HEK293 (cell line): ENCODE measurements at regions of chr9 and their contacts with region 1.

Region 1: GRCh38 chr9:35826071-35826701 is 2.3 kb downstream of the FAM221B start:
- H3K4me3 ChIP-seq: no peak overlapping the region
- H3K27ac ChIP-seq: no peak overlapping the region; the same call in 1 of the 2 replicates
- H3K4me1 ChIP-seq: peaks cover 4% of the 10 kb centered on the region; the same call in 1 of the 2 replicates
- CTCF ChIP-seq: peak; percentile 65; the same call in 1 of the 2 replicates

Region 2: GRCh38 chr9:34985311-34985899 is 840.8 kb before region 1 on chr9:
- CTCF ChIA-PET with region 1: no interaction called
- POLR2A ChIA-PET with region 1: no interaction called
- H3K4me3 ChIP-seq: no peak overlapping the region
- H3K27ac ChIP-seq: no peak overlapping the region
- H3K4me1 ChIP-seq: no peaks in the 10 kb centered on the region
- CTCF ChIP-seq: 0 out of 2 replicates have a peak, but pooled peaks have one; percentile 10

Region 3: DNA sequence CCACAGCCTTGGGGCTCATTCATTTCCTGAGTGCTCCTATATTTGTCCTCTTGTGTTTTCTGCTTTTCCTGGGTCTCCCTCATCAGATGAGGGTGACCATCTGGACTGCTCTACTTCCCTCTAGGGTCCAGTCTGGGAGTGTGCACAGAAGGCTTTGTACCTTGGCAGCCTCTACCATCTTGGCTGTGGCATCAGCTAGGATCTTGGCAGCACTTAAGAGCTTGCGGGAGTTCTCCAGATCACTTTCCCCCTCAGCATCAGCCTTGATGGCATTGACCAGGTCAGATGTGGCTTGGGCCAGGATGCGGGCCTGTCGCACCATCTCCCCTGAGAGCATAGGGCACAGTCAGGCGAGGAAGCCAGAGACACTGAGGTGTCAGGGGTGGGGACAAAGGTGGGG is 110.0 kb before region 1 on chr9:
- CTCF ChIA-PET with region 1: no interaction called
- POLR2A ChIA-PET with region 1: no interaction called
- H3K4me3 ChIP-seq: no peak overlapping the region
- H3K27ac ChIP-seq: no peak overlapping the region
- H3K4me1 ChIP-seq: no peaks in the 10 kb centered on the region
- CTCF ChIP-seq: no peak

Region 4: GRCh38 chr9:35798658-35799374 is 27.4 kb before region 1 on chr9:
- CTCF ChIA-PET with region 1: interaction called, 19 read pairs
- POLR2A ChIA-PET with region 1: no interaction called
- H3K4me3 ChIP-seq: no peak overlapping the region
- H3K27ac ChIP-seq: no peak overlapping the region
- H3K4me1 ChIP-seq: no peaks in the 10 kb centered on the region
- CTCF ChIP-seq: no peak

Region 5: GRCh38 chr9:35814841-35815543 is 11.2 kb before region 1 on chr9 and contains the start of gene HINT2:
- CTCF ChIA-PET with region 1: interaction called, 42 read pairs
- POLR2A ChIA-PET with region 1: interaction called, 11 read pairs
- H3K4me3 ChIP-seq: peak within 1 kb of the TSS; percentile 76
- H3K27ac ChIP-seq: peak within 1 kb of the TSS; percentile 78
- H3K4me1 ChIP-seq: no peaks in the 10 kb centered on the region
- CTCF ChIP-seq: no peak

Region 6: GRCh38 chr9:35910613-35911359 is 84.6 kb after region 1 on chr9:
- CTCF ChIA-PET with region 1: interaction called, 18 read pairs
- POLR2A ChIA-PET with region 1: no interaction called
- H3K4me3 ChIP-seq: no peak overlapping the region
- H3K27ac ChIP-seq: no peak overlapping the region
- H3K4me1 ChIP-seq: peaks cover 10% of the 10 kb centered on the region
- CTCF ChIP-seq: peak; percentile 49; the same call in 1 of the 2 replicates

Region 7: DNA sequence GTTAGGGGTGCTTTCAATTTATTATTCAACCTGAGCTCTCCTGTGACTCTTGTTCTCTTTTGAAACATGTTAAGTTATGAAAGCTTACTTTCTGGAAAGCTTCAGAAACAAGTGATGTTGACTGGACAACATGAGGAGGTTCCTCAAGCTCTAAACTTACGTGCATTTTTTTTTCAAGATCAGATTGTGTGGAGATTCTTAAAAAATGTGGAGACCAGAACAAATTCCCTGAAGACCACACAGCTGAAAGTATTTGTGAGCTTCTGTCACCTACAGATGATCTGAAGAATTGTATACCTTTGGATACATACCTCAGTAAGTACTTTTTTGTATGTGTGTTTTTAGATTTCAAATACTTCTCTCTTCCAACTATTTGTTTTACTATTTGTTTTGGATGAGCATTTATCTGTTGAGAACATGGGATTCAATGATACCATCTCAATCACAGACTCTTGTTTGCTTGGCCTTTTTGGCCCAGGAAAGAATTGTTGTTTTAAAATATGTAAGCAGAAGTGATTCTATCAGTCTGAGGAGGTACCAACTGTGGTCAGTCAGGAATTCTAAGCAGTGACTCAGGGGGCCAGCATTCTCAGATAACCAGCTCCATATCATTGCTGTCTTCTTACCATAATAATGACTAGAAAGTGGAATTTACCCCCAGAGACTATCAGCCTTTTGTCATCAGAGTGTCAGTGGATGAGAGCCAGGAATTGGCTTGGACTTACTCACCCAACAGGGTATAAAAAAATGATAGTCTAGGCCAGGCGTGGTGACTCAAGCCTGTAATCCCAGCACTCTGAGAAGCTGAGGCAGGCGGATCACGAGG is 275.9 kb after region 1 on chr9:
- CTCF ChIA-PET with region 1: no interaction called
- POLR2A ChIA-PET with region 1: no interaction called
- H3K4me3 ChIP-seq: no peak overlapping the region
- H3K27ac ChIP-seq: no peak overlapping the region
- H3K4me1 ChIP-seq: no peaks in the 10 kb centered on the region
- CTCF ChIP-seq: no peak

Region 8: GRCh38 chr9:36118706-36119105 is 292.5 kb after region 1 on chr9:
- CTCF ChIA-PET with region 1: no interaction called
- POLR2A ChIA-PET with region 1: no interaction called
- H3K4me3 ChIP-seq: no peak overlapping the region
- H3K27ac ChIP-seq: no peak overlapping the region
- H3K4me1 ChIP-seq: no peaks in the 10 kb centered on the region
- CTCF ChIP-seq: no peak